AG04449 (cell line): ENCODE measurements at regions of chr7 and their contacts with region 1.

Region 1: GRCh38 chr7:70040970-70041766 is 442.9 kb downstream of the AUTS2 start:
- DNase-seq: no peak
- H3K4me3 ChIP-seq: no peak overlapping the region
- CTCF ChIP-seq: peak; percentile 24

Region 2: DNA sequence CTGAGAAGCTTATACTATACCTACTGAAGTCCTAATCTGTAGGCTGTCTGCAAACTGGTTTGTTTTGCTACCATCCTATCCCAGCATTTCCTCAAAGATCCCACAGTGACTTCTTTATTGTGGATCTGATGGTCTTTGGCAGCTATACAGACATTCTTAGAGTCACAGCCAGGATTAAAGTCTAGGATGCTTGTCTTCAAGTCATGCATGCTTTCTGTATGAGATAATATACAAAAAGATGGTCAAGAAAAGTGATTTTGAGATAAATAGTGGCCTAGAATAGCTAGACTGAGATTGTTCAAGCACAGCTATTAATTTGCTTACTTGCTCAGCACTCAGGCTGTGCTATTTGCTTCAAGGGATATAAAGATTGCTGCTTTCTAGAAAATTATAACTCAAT is 11.5 kb after region 1 on chr7:
- CTCF ChIA-PET with region 1: interaction called, 51 read pairs
- POLR2A ChIA-PET with region 1: no interaction called
- DNase-seq: peak; percentile 76
- H3K4me3 ChIP-seq: no peak overlapping the region
- CTCF ChIP-seq: no peak

Region 3: DNA sequence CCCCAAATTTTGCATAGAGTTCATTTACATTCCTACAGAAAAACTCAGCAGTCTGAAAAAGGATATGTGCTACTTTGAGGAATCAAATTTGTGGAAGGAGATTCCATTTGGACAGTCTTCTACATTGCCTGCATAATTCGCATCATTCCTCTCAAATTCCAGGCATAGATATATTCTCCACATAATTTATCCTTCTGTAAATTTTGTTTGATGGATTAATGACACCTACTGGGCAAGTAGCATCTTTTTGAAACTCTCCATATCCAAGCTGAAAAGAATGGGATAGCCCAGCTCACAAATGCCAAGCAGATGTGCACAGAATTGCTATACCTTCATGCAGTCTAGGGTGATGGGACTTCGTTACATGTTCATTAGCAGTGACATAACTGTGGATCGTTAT is 72.4 kb after region 1 on chr7:
- CTCF ChIA-PET with region 1: interaction called, 11 read pairs
- POLR2A ChIA-PET with region 1: interaction called, 3 read pairs
- DNase-seq: peak; percentile 44
- H3K4me3 ChIP-seq: no peak overlapping the region
- CTCF ChIP-seq: no peak

Region 4: DNA sequence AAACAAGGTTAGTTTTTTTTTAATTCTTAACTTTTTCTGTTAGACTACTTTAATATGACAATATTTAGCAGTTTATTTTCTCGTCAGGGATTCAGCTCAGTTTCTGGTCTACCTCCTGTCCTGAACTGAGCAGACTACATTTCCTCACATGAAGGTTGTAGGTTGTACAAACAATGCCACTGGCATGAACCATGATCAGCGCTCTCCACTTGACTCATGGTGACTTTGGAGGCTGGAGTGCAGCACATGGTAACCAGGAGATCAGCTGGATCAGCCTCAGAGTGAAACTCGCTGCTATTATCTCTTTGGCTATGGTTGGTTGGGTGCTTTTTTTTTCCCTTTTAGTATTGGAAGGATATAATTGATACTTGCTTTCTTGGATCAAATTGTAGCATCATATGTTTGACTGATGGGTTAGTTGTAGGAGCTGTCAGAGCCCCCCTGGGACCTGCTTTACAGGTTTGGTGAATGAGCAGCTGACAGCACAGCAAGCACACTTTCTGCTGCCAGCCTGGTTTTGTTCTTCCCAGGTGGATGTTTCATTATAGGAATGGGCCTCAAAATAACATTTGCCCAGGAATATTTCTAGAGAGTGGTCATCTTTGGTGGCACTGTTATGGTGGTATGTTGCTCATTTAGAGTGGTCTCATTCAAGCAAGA is 113.5 kb after region 1 on chr7:
- CTCF ChIA-PET with region 1: interaction called, 150 read pairs
- POLR2A ChIA-PET with region 1: no interaction called
- DNase-seq: no peak
- H3K4me3 ChIP-seq: no peak overlapping the region
- CTCF ChIP-seq: no peak

Region 5: GRCh38 chr7:70237831-70238575 is 196.8 kb after region 1 on chr7:
- CTCF ChIA-PET with region 1: no interaction called
- POLR2A ChIA-PET with region 1: no interaction called
- DNase-seq: no peak
- H3K4me3 ChIP-seq: no peak overlapping the region
- CTCF ChIP-seq: no peak

Region 6: GRCh38 chr7:70288781-70289456 is 247.8 kb after region 1 on chr7:
- CTCF ChIA-PET with region 1: no interaction called
- POLR2A ChIA-PET with region 1: no interaction called
- DNase-seq: no peak
- H3K4me3 ChIP-seq: no peak overlapping the region
- CTCF ChIP-seq: no peak

Region 7: DNA sequence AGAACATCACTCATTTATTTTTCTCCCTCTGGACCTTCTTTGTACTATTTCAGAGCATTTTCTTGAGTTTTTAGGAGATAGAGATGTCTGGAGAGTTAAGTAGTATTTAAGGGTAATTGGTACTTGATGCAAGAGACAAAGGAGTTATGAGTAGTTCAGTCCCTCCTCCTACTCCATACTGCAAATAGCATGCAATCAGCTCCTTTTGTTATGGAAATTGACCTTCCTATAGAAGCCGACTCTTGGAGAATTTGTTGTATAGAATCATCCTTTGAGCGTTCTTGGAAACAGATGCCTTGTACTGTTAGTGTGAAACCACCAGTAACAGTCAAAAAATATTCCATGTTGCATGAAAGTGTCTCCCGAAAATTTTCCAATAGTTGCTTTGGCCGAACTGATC is 662.6 kb after region 1 on chr7:
- CTCF ChIA-PET with region 1: interaction called, 95 read pairs
- POLR2A ChIA-PET with region 1: no interaction called
- DNase-seq: no peak
- H3K4me3 ChIP-seq: no peak overlapping the region
- CTCF ChIP-seq: no peak